ENCODE measurements at regions of chr12 and their contacts with region 1.

Region 1: DNA sequence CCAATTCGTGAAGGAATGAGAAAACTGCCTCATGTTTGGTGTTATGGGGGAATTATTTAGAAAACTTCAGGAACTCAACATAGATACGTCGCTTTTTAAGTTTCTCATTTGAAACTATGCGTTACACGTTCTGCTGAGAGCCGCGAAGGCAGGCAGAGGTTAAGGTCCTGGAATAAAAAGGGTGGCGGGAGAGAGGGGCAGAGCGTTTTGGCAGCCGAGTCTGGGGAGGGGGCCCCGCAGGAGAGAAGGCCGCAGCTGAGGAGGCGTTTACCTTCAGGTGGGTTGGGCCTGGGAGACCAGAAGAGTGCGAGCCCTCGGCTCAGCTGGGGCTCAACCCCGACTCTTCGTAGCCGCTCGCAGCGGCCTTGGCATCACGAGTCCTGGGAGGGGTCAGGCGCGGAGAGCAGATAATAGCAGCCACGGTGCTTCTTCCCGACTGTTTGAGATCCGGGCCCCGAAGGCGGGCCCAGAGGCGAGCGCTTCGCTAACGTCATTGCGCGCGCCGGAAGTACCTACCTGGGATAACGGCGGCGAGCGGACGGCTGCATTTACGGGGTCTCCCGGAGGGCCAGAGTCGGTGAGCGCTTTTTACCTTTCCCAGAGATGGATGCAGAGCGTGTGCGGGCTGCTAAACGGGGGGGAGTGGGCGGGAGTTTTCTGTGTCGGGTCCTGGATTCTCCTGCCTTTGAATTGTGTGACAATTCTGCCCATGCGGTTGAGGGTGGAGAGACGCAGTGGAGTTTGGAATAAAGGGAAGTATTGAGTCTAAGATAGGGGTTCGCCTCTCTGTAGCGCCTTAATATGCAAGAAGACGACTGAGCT is at the starts of genes PPHLN1 and ZCRB1:
- DNase-seq: peak; percentile 84
- H3K4me3 Mint-ChIP-seq: peak within 1 kb of the TSS; percentile 100
- H3K27ac Mint-ChIP-seq: peak within 1 kb of the TSS; percentile 99
- H3K4me1 Mint-ChIP-seq: peaks cover 23% of the 10 kb centered on the region
- H3K27me3 Mint-ChIP-seq: no peaks in the 10 kb centered on the region
- CTCF ChIP-seq: no peak
- total RNA-seq, gene PPHLN1: 51.1 and 54.5 TPM in 2 replicates
- total RNA-seq, gene ZCRB1: 62.2 and 76.7 TPM in 2 replicates

Region 2: DNA sequence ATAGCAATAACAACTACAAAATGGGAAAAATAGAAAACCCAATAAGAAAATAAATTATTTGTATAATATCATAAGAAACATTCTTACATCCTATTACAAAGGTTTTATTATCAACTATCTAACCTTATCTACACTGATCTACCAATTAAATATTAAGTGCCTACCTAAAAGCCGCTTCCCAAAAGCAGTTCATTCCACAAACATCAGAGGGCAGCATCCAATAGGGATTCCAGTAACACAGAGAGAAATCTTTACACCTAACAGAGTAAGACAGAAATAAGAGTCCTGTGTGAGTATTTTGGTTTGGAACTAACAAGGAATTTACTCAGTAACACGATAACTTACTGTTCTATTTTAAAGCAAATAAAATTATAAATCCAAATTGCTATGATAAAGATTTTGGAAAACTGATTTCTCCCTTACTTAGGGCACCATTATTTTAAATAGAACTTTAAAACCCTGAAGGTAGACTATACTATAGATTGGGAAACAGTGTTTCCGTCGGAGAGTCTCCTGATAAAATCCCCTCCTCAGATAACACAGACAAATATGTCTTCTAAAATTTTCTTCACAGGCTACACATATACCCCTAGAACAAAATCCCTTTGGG is 196.2 kb before region 1 on chr12:
- CTCF ChIA-PET with region 1: interaction called, 33 read pairs
- POLR2A ChIA-PET with region 1: interaction called, 18 read pairs
- intact Hi-C with region 1: no loop called
- DNase-seq: peak; percentile 81
- H3K4me3 Mint-ChIP-seq: peak overlapping the region; percentile 66
- H3K27ac Mint-ChIP-seq: peak overlapping the region; percentile 74
- H3K4me1 Mint-ChIP-seq: peaks cover 26% of the 10 kb centered on the region
- H3K27me3 Mint-ChIP-seq: no peaks in the 10 kb centered on the region
- CTCF ChIP-seq: peak; percentile 73

Region 3: DNA sequence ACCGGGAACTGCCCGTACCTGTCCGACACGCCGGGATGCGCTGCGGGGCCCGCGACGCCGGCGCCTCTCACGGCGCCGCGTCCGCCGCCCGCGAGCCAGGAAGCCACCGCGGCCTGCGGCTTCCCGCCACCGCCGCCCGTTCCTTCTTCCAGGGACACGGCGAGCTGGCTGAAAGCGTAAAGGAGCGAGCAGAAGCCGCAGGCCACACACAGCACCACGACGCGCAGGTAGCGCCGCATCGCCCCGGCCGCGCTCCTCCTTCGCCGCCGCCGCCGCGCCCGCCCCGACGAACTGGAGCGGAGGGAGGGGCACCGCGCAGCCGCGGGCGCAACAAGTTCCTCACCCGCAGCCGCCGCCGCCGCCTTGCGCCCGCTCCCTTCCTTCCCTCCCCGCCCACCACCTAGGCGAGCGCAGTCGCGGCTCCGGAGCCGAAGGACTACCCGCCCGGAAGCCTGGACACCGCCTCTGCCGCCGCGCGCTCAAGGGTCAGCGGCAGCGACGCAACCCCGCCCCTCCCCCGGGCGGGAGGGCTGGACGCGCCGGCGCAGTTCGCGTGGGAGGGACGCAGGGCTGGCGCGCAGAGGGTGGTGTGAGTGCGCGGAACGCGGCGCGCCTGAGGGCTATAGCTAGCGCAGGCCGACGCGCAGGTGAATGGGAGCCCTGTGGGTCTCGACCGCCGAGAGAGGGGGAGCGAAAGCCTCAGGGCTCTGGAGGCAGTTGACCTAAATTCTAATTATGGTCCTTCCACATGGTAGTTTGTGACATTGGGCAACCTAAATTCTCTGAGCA is 181.3 kb before region 1 on chr12 and contains the start of gene GXYLT1:
- CTCF ChIA-PET with region 1: interaction called, 3 read pairs
- POLR2A ChIA-PET with region 1: interaction called, 15 read pairs
- intact Hi-C with region 1: no loop called
- DNase-seq: peak; percentile 94
- H3K4me3 Mint-ChIP-seq: peak within 1 kb of the TSS; percentile 85
- H3K27ac Mint-ChIP-seq: peak within 1 kb of the TSS; percentile 92
- H3K4me1 Mint-ChIP-seq: peaks cover 30% of the 10 kb centered on the region
- H3K27me3 Mint-ChIP-seq: no peaks in the 10 kb centered on the region
- CTCF ChIP-seq: no peak
- total RNA-seq, gene GXYLT1: 12.4 and 14.6 TPM in 2 replicates

Region 4: GRCh38 chr12:42237052-42237852 is 88.6 kb before region 1 on chr12:
- CTCF ChIA-PET with region 1: interaction called, 4 read pairs
- POLR2A ChIA-PET with region 1: interaction called, 16 read pairs
- intact Hi-C with region 1: no loop called
- DNase-seq: peak; percentile 72
- H3K4me3 Mint-ChIP-seq: peak overlapping the region; percentile 95
- H3K27ac Mint-ChIP-seq: peak overlapping the region; percentile 97
- H3K4me1 Mint-ChIP-seq: peaks cover 19% of the 10 kb centered on the region
- H3K27me3 Mint-ChIP-seq: no peaks in the 10 kb centered on the region
- CTCF ChIP-seq: peak; percentile 26

Region 5: DNA sequence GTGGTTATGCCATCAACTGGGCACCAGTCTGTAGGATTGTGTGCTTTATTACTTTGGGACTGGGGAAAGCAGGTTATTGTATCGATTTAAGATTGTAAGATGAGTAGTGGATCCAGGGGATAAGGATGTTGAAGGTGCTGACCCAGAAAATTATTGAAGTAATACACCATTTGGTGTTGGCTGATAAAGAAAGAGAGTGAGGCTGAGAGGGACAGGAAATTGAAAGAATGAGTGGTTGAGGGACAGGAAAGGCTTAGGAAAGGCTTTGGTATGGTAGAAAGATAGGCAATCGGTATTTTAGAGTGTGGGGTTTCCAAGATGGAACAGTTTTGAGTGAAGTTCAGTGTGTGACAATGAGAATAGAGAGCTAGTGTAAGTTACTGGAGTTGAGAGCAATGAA is 12.4 kb after region 1 on chr12:
- CTCF ChIA-PET with region 1: no interaction called
- POLR2A ChIA-PET with region 1: interaction called, 11 read pairs
- intact Hi-C with region 1: no loop called
- DNase-seq: no peak
- H3K4me3 Mint-ChIP-seq: no peak overlapping the region
- H3K27ac Mint-ChIP-seq: no peak overlapping the region
- H3K4me1 Mint-ChIP-seq: peaks cover 24% of the 10 kb centered on the region
- H3K27me3 Mint-ChIP-seq: no peaks in the 10 kb centered on the region
- CTCF ChIP-seq: no peak

Region 6: GRCh38 chr12:42346403-42347002 is 20.6 kb after region 1 on chr12:
- CTCF ChIA-PET with region 1: interaction called, 3 read pairs
- POLR2A ChIA-PET with region 1: interaction called, 11 read pairs
- intact Hi-C with region 1: no loop called
- DNase-seq: no peak
- H3K4me3 Mint-ChIP-seq: no peak overlapping the region
- H3K27ac Mint-ChIP-seq: no peak overlapping the region
- H3K4me1 Mint-ChIP-seq: peaks cover 12% of the 10 kb centered on the region
- H3K27me3 Mint-ChIP-seq: no peaks in the 10 kb centered on the region
- CTCF ChIP-seq: no peak

Measured in MCF 10A (cell line).